Caco-2 (cell line): ENCODE measurements at regions of chr10 and their contacts with region 1.

Region 1: GRCh38 chr10:26334932-26335573 is 103.1 kb upstream of the APBB1IP start:
- DNase-seq: peak; percentile 78 to 81
- H3K4me3 ChIP-seq: no peak overlapping the region
- H3K4me3 Mint-ChIP-seq: peak overlapping the region; percentile 43
- H3K27ac Mint-ChIP-seq: peak overlapping the region; percentile 53
- H3K4me1 ChIP-seq: peaks cover 6% of the 10 kb centered on the region
- H3K4me1 Mint-ChIP-seq: peaks cover 23% of the 10 kb centered on the region
- H3K27me3 ChIP-seq: no peaks in the 10 kb centered on the region
- H3K27me3 Mint-ChIP-seq: no peaks in the 10 kb centered on the region
- CTCF ChIP-seq: peak; percentile 86 to 98

Region 2: DNA sequence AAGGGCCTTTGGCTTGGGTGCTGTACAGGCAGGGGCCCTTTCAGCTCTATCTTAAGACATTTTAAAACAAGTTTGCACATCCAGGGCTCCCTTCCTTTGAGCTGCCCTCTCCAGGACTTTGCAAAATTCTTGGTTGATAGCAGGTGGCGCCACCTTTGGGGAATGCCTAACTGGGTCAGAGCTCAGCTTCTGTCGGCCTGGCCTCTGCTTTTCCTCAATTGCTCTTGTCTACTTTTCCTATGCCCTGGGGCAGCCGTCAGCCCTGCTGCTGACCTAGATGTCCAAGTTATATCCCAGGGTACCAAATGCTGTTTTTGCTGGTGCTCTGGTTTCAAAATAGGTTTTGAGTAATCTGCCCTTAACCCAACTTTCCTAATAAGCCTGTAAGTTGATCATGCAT is 168.9 kb after region 1 on chr10:
- CTCF ChIA-PET with region 1: interaction called, 4 read pairs
- POLR2A ChIA-PET with region 1: no interaction called
- intact Hi-C with region 1: loop called (anchors 1 kb)
- DNase-seq: peak; percentile 47 to 48
- H3K4me3 ChIP-seq: no peak overlapping the region
- H3K4me3 Mint-ChIP-seq: no peak overlapping the region
- H3K27ac Mint-ChIP-seq: no peak overlapping the region
- H3K4me1 ChIP-seq: peaks cover 8% of the 10 kb centered on the region; the same call in 1 of the 2 replicates
- H3K4me1 Mint-ChIP-seq: peaks cover 5% of the 10 kb centered on the region
- H3K27me3 ChIP-seq: no peaks in the 10 kb centered on the region
- H3K27me3 Mint-ChIP-seq: no peaks in the 10 kb centered on the region
- CTCF ChIP-seq: peak; percentile 35 to 46

Region 3: DNA sequence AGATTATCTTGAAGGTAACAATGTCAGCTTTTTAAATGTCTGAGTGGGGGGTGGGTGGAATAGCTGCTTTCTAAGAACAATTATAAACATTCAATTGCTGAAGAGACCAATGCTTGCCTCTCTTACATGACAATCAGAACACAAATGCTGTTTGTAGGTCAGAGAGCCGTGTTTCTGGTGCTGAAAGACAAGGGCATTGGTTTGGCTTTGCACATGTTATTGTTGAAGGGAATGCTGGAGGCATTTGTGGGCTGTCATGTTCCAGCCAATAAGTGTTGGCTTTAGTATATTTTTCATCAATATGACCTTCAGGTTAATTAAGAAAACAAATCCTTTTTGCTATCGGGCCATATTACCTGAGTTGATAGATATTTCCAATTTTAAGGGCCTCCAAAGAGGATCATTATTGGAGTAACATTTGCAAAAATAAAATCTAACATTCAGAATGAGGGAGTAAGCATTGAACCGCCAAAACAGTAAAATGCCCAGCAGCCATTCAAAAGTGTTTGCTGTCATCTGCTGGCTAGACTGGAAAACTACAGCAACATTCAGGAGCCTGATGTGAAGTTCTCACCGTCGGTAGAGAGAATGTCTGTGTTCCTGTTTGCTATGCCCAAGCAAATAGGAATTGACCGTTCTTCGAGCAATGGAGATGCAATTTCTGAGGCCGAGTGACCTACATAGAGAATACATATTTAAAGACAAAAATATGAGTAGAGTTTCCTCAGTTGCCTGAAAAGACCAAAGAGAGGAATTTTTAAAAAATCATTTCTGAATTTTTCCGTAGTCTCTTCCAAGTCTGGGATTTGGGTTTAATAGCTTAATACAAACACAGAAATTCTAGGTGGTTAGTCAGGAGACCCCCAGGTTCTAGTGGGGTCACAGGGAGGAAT is 221.9 kb after region 1 on chr10:
- CTCF ChIA-PET with region 1: interaction called, 15 read pairs
- POLR2A ChIA-PET with region 1: no interaction called
- intact Hi-C with region 1: loop called (anchors 1 kb)
- DNase-seq: peak in 1 of 2 experiments; percentile 73
- H3K4me3 ChIP-seq: no peak overlapping the region
- H3K4me3 Mint-ChIP-seq: no peak overlapping the region
- H3K27ac Mint-ChIP-seq: no peak overlapping the region
- H3K4me1 ChIP-seq: peaks cover 17% of the 10 kb centered on the region
- H3K4me1 Mint-ChIP-seq: peaks cover 13% of the 10 kb centered on the region
- H3K27me3 ChIP-seq: no peaks in the 10 kb centered on the region
- H3K27me3 Mint-ChIP-seq: no peaks in the 10 kb centered on the region
- CTCF ChIP-seq: peak; percentile 96 to 99

Region 4: GRCh38 chr10:26725837-26726727 is 391.0 kb after region 1 on chr10:
- CTCF ChIA-PET with region 1: interaction called, 3 read pairs
- POLR2A ChIA-PET with region 1: no interaction called
- intact Hi-C with region 1: loop called (anchors 2 kb)
- DNase-seq: peak in 1 of 2 experiments; percentile 69
- H3K4me3 ChIP-seq: no peak overlapping the region
- H3K4me3 Mint-ChIP-seq: no peak overlapping the region
- H3K27ac Mint-ChIP-seq: no peak overlapping the region
- H3K4me1 ChIP-seq: no peaks in the 10 kb centered on the region
- H3K4me1 Mint-ChIP-seq: no peaks in the 10 kb centered on the region
- H3K27me3 ChIP-seq: no peaks in the 10 kb centered on the region
- H3K27me3 Mint-ChIP-seq: no peaks in the 10 kb centered on the region
- CTCF ChIP-seq: peak; percentile 88 to 93

Region 5: DNA sequence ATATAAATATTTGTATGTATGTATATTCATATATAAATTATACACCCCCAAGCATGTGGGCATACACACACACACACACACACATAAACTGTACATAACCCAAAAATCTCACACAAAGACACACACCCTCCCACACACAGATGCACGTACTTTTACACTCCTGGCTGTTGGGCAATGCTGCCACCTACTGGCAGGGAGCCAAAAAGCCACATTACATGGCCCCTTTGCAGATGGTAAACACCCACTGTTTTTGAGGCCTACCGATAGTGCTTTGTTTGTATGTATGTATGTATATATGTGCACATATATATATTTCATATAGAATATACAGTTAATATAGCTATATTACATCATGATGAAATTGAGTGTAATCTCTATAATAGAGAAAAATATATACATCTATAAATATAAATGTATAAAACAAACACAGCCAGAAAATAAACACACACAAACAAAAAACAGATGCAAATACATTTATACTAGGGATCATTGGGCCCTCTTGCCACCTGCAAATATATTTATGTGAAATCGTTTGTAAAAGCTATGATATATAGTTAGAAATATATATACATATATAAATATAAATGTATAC is 1025.6 kb after region 1 on chr10:
- CTCF ChIA-PET with region 1: no interaction called
- POLR2A ChIA-PET with region 1: no interaction called
- intact Hi-C with region 1: loop called (anchors 1 kb)
- DNase-seq: peak; percentile 81 to 89
- H3K4me3 ChIP-seq: no peak overlapping the region
- H3K4me3 Mint-ChIP-seq: no peak overlapping the region
- H3K27ac Mint-ChIP-seq: no peak overlapping the region
- H3K4me1 ChIP-seq: no peaks in the 10 kb centered on the region
- H3K4me1 Mint-ChIP-seq: no peaks in the 10 kb centered on the region
- H3K27me3 ChIP-seq: no peaks in the 10 kb centered on the region
- H3K27me3 Mint-ChIP-seq: peaks cover 3% of the 10 kb centered on the region
- CTCF ChIP-seq: peak; percentile 98 to 99

Region 6: GRCh38 chr10:27857616-27858015 is 1522.6 kb after region 1 on chr10:
- CTCF ChIA-PET with region 1: no interaction called
- POLR2A ChIA-PET with region 1: no interaction called
- intact Hi-C with region 1: no loop called
- DNase-seq: no peak
- H3K4me3 ChIP-seq: no peak overlapping the region
- H3K4me3 Mint-ChIP-seq: no peak overlapping the region
- H3K27ac Mint-ChIP-seq: no peak overlapping the region
- H3K4me1 ChIP-seq: no peaks in the 10 kb centered on the region
- H3K4me1 Mint-ChIP-seq: no peaks in the 10 kb centered on the region
- H3K27me3 ChIP-seq: no peaks in the 10 kb centered on the region
- H3K27me3 Mint-ChIP-seq: peaks cover 14% of the 10 kb centered on the region
- CTCF ChIP-seq: no peak